ENCODE measurements at regions of chr3 and their contacts with region 1.

Region 1: DNA sequence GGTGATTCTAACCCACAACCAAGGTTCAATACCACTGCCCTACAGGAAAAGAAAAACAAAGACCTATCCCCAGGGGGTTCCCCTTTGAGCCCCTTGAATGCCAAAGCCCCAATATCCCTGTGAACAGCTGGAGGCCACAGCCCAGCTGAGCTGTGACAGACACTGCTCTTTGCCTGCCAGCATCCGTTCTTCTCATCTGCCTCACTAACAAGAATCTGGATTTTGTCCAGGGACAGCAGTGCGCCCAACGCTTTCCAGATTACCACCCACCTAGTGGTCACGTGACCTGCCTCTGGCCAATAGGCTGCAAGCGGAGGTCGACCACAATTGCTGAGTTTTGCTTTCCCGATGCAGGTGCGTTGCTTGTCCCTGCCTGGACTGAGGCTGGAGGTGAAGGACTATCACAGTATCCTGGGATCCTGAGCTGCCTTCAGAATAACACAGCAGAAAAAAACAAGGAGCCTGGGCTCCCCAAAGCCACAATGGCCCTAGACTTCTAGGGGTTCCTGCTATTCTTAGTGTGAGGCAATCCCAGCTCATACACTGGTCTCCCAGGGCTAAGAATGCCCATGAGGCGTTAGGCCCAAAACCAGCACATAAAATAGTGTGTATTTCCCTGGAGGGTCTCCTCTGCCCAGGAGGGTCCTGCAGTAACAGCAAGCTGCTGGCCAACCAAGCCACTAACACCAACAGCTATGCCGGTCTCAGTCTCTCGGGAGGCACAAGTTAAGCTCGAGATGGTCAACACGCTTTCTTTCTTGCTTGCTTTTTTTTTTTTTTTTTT is 13.8 kb downstream of the BDH1 start:
- DNase-seq: no peak
- H3K4me3 ChIP-seq: no peak overlapping the region
- H3K27ac ChIP-seq: peak overlapping the region; percentile 80
- H3K4me1 ChIP-seq: peaks cover 36% of the 10 kb centered on the region
- H3K27me3 ChIP-seq: no peaks in the 10 kb centered on the region
- CTCF ChIP-seq: no peak

Region 2: DNA sequence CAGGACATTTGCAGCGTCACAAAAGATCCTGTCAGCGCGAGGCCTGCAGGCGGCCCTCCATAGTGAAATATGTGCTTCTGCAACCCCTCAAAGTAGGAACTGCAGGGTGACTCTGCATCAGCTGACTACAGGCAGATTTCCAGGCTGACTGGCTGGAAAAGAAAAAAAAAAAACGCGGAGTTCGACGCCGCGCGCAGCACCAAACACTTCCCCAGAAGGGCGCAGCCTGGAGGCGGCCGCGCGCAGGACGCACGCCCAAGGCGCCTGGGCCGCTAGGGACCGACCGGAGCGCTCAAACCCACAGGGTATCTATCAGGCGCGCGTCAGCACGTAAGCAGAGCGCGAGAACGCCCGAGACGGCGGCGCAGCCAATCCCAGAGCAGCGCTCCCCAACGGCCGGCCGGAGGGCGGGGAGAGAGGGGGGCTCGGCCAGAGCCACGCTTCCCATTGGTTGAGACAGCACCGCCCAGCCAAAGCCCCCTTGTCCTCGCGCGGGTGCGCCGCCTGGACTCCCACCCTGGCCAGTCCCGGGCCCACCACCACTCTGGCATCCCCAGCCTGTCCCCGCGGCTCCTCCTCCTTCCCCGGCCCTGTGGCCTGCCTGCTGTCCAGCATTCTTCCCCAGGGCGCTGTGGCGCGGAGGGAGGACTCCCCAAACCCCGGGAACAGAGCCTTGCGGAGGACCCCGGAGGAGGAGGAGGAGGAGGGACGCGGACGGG is 12.8 kb after region 1 on chr3:
- CTCF ChIA-PET with region 1: interaction called, 3 read pairs
- POLR2A ChIA-PET with region 1: interaction called, 4 read pairs
- intact Hi-C with region 1: loop called (anchors 1 kb)
- DNase-seq: peak; percentile 94 to 99
- H3K4me3 ChIP-seq: peak overlapping the region; percentile 75
- H3K27ac ChIP-seq: peak overlapping the region; percentile 34
- H3K4me1 ChIP-seq: peaks cover 14% of the 10 kb centered on the region
- H3K27me3 ChIP-seq: no peaks in the 10 kb centered on the region
- CTCF ChIP-seq: peak; percentile 68; the same call in 1 of the 2 replicates

Region 3: GRCh38 chr3:197750858-197751737 is 209.2 kb after region 1 on chr3:
- CTCF ChIA-PET with region 1: no interaction called
- POLR2A ChIA-PET with region 1: no interaction called
- intact Hi-C with region 1: no loop called
- DNase-seq: peak; percentile 39 to 40
- H3K4me3 ChIP-seq: peak overlapping the region; percentile 79
- H3K27ac ChIP-seq: peak overlapping the region; percentile 76
- H3K4me1 ChIP-seq: peaks cover 25% of the 10 kb centered on the region
- H3K27me3 ChIP-seq: no peaks in the 10 kb centered on the region
- CTCF ChIP-seq: no peak

Region 4: DNA sequence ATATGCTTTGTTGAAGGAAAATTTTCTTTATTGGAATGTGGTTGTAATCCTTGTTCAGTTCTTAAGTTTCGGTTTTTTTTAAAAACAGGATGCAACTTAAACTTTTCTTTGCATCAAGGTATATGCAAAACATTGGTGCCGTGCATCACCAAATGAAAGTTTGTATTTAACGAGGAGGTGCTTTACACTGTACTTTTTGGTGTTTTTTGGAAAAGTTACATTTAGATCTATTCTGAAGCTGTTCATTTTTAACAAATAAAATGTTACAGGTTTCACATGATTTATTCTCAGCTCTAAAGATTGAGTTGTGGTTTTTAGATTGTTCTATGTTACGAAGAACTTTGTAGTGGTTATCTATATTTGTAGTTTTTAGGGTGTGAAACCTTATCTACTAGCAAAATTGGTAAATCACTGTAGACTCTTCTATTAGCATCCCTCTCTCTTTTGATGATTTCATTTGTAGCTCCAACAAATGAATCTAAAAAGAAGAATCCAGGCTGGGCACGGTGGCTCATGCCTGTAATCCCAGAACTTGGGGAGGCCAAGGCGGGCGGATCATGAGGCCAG is 242.2 kb after region 1 on chr3:
- CTCF ChIA-PET with region 1: no interaction called
- POLR2A ChIA-PET with region 1: interaction called, 10 read pairs
- intact Hi-C with region 1: no loop called
- DNase-seq: no peak
- H3K4me3 ChIP-seq: no peak overlapping the region
- H3K27ac ChIP-seq: no peak overlapping the region
- H3K4me1 ChIP-seq: peaks cover 16% of the 10 kb centered on the region
- H3K27me3 ChIP-seq: no peaks in the 10 kb centered on the region
- CTCF ChIP-seq: no peak

Measured in PC-9 (cell line).